ENCODE measurements at regions of chr5 and their contacts with region 1.

Region 1: DNA sequence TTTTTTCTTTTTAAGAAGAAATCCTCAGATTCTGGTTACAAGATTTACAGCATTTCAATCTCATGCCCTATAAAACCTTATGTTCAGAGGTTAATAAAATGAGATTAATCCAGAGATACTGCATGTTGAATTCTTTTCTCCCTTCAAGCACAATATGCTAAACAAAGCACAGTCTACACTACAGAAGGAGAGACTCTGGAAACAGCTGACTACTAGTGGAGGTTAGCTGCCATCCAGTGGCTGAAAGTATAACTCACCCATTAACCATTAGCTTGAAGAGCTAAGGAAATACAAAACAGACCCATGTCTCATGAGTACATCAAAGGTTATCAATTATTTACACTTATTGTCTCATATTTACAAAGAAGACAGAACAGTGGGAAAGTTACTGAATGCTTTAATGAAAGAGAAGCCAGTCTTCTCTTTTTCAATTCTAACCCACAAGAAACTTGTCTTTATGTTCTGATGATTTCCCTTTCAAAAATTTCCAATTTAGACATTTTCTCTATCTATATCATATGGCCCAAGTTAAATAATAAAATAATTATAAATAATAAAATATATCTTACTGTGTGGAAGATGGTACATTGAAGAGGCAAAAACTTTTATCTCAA is 12.7 kb upstream of the DNAH5 start:
- DNase-seq: peak; percentile 54
- ATAC-seq: peak; percentile 99
- H3K4me3 ChIP-seq: no peak overlapping the region
- H3K27ac ChIP-seq: no peak overlapping the region
- H3K4me1 ChIP-seq: no peaks in the 10 kb centered on the region
- H3K27me3 ChIP-seq: 0 out of 5 replicates have a peak, but pooled peaks cover 0 to 3% of the 10 kb centered on the region in 2 experiments
- CTCF ChIP-seq: peak; percentile 83
- EP300 ChIP-seq: no peak
- POLR2A ChIP-seq: no peak
- RAD21 ChIP-seq: peak; percentile 37; the same call in 1 of the 2 replicates

Region 2: GRCh38 chr5:12023614-12024241 is 1933.4 kb before region 1 on chr5:
- CTCF ChIA-PET with region 1: no interaction called
- POLR2A ChIA-PET with region 1: no interaction called
- in situ Hi-C with region 1: no loop called
- intact Hi-C with region 1: loop called (anchors 5 kb)
- DNase-seq: peak; percentile 33
- ATAC-seq: 0 out of 3 replicates have a peak, but pooled peaks have one; percentile 40
- H3K4me3 ChIP-seq: no peak overlapping the region
- H3K27ac ChIP-seq: no peak overlapping the region
- H3K4me1 ChIP-seq: no peaks in the 10 kb centered on the region
- H3K27me3 ChIP-seq: no peaks in the 10 kb centered on the region
- CTCF ChIP-seq: peak; percentile 62
- EP300 ChIP-seq: no peak
- POLR2A ChIP-seq: no peak
- RAD21 ChIP-seq: no peak

Region 3: GRCh38 chr5:12284604-12285003 is 1672.5 kb before region 1 on chr5:
- CTCF ChIA-PET with region 1: no interaction called
- POLR2A ChIA-PET with region 1: no interaction called
- in situ Hi-C with region 1: no loop called
- intact Hi-C with region 1: loop called (anchors 5 kb)
- DNase-seq: no peak
- ATAC-seq: no peak
- H3K4me3 ChIP-seq: no peak overlapping the region
- H3K27ac ChIP-seq: no peak overlapping the region
- H3K4me1 ChIP-seq: no peaks in the 10 kb centered on the region
- H3K27me3 ChIP-seq: no peaks in the 10 kb centered on the region
- CTCF ChIP-seq: no peak
- EP300 ChIP-seq: no peak
- POLR2A ChIP-seq: no peak
- RAD21 ChIP-seq: no peak

Region 4: DNA sequence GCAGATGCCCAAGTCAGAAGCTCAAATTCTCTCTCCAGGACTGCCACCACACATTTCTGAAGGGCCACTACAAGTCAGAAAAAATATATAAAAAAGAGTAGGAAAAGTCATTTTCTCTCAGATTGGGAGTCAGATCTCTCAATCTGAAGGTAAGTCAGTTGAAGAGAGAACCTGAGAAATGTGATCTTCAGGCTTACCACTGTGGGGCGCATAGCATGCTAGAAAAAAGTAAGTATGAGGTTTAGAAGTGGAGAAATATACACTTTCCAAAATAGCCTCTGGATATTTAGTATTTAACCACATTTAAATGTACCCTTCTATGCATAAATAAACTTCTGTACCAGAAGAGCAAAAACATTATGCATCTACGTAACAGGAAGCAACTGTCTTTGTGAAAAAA is 1252.2 kb before region 1 on chr5:
- CTCF ChIA-PET with region 1: no interaction called
- POLR2A ChIA-PET with region 1: no interaction called
- in situ Hi-C with region 1: no loop called
- intact Hi-C with region 1: loop called (anchors 10 kb)
- DNase-seq: no peak
- ATAC-seq: no peak
- H3K4me3 ChIP-seq: no peak overlapping the region
- H3K27ac ChIP-seq: no peak overlapping the region
- H3K4me1 ChIP-seq: no peaks in the 10 kb centered on the region
- H3K27me3 ChIP-seq: no peaks in the 10 kb centered on the region
- CTCF ChIP-seq: no peak
- EP300 ChIP-seq: no peak
- POLR2A ChIP-seq: no peak
- RAD21 ChIP-seq: no peak

Region 5: DNA sequence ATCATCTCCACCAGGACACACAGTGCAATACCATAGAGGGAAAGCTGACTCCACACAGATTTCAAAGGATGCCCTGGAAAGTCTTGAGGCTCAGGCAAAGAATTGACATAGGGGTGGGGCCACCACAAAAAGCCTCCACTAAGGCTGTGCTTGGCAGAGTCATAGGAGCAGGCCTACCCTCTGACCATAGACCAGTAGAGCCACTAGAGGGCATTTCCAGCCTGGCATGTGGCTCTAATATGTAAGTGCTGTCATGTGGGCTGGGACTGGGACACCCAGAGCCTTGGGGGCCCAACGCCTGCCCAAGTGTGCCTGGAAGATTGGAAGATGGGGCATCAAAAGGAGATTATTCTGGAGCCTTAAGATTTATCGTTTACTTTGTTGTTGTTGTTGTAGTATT is 738.6 kb before region 1 on chr5:
- CTCF ChIA-PET with region 1: no interaction called
- POLR2A ChIA-PET with region 1: no interaction called
- in situ Hi-C with region 1: no loop called
- intact Hi-C with region 1: loop called (anchors 5 kb)
- DNase-seq: no peak
- ATAC-seq: no peak
- H3K4me3 ChIP-seq: no peak overlapping the region
- H3K27ac ChIP-seq: no peak overlapping the region
- H3K4me1 ChIP-seq: no peaks in the 10 kb centered on the region
- H3K27me3 ChIP-seq: no peaks in the 10 kb centered on the region; a peak in 1 of 5 replicates
- CTCF ChIP-seq: no peak
- EP300 ChIP-seq: no peak
- POLR2A ChIP-seq: no peak
- RAD21 ChIP-seq: no peak

Measured in HepG2 (cell line).